Dorsolateral prefrontal cortex (tissue), 120 donors: ENCODE measurements at regions of chr16 and their contacts with region 1.

Region 1: GRCh38 chr16:3003582-3004302 is 9.0 kb upstream of the CLDN9 start:
- DNase-seq: peak; percentile 95 to 99 (median 98)
- H3K4me3 ChIP-seq: peak overlapping the region in 57 of 59 donors; percentile 10 to 69 (median 52)
- H3K27ac ChIP-seq: peak overlapping the region in 5 of 59 donors; percentile 3 to 62 (median 42)
- H3K27me3 ChIP-seq: peaks cover 0 to 9% (median 0%) of the 10 kb centered on the region in 45 donors
- CTCF ChIP-seq: peak; percentile 25 to 91 (median 70)

Region 2: GRCh38 chr16:2968738-2969544 is 34.8 kb before region 1 on chr16 and contains the start of gene PAQR4:
- intact Hi-C with region 1: no loop called
- DNase-seq: peak; percentile 73 to 94 (median 86)
- H3K4me3 ChIP-seq: peak within 1 kb of the TSS; percentile 67 to 99 (median 91)
- H3K27ac ChIP-seq: peak within 1 kb of the TSS; percentile 65 to 99 (median 96)
- H3K27me3 ChIP-seq: peaks cover 0 to 43% (median 35%) of the 10 kb centered on the region in 45 donors
- CTCF ChIP-seq: peak in 27 of 56 donors; percentile 5 to 55 (median 28)
- total RNA-seq, gene PAQR4: 31.9 to 177 (median 57.8) TPM

Region 3: DNA sequence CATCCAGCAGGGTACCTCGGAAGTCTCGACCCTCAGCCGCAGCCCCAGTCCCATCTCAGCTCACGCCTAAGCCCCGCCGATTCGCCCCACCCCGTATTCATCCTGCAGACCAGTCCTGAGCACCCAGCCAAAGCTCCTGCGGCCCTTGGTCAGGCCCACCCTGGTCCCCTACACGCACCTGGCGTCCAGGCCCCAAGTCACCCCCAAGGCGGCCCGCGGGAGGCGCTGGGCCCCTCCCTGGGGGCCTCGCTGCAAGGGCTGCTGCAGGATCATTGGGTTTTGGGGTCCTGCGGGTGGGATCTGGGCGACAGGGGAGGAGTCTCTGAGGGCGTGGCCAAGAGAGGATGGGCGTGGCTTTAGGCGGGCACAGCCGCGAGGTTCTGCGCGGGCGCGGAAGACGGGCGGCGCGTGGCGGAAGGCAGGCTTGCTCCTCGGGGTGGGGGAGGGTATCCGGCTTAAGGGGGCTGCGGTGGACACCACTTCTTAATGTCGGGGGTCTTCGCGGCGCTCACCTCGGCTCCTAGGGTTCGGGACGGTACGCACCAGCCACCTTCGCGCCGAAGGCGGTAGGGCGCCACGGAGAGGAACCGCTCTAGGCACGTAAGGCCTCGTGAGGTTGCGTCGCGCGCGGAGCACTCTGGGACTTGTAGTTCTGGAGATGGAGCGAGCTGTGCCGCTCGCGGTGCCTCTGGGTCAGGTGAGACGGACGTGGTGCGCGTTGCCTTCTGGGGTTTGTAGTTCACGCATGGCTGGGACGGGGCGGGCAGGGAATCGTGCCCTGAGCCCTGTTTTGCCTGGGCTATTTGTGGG is 20.1 kb after region 1 on chr16 and contains the starts of genes HCFC1R1 and THOC6:
- intact Hi-C with region 1: loop called in 1 of 2 experiments (anchors 2 kb)
- DNase-seq: peak; percentile 97 to 99 (median 98)
- H3K4me3 ChIP-seq: peak within 1 kb of the TSS; percentile 58 to 99 (median 88)
- H3K27ac ChIP-seq: peak within 1 kb of the TSS; percentile 73 to 98 (median 92)
- H3K27me3 ChIP-seq: peaks cover 0 to 8% (median 2%) of the 10 kb centered on the region in 45 donors
- CTCF ChIP-seq: peak in 33 of 56 donors; percentile 7 to 56 (median 34)
- total RNA-seq, gene HCFC1R1: 50.9 to 124 (median 83.2) TPM
- total RNA-seq, gene THOC6: 4.3 to 13.3 (median 8.8) TPM

Region 4: GRCh38 chr16:3029537-3030402 is 26.0 kb after region 1 on chr16:
- intact Hi-C with region 1: loop called in 1 of 2 experiments (anchors 2 kb)
- DNase-seq: peak in 1 of 10 donors; percentile 41
- H3K4me3 ChIP-seq: peak overlapping the region in 15 of 59 donors; percentile 9 to 39 (median 21)
- H3K27ac ChIP-seq: no peak overlapping the region
- H3K27me3 ChIP-seq: peaks cover 0 to 62% (median 32%) of the 10 kb centered on the region in 45 donors
- CTCF ChIP-seq: no peak